ENCODE measurements at regions of chr19 and their contacts with region 1.

Region 1: GRCh38 chr19:18856385-18857126 is 24.8 kb downstream of the UPF1 start:
- DNase-seq: peak in 2 of 3 donors; percentile 47 to 58
- ATAC-seq: peak in 3 of 4 donors; percentile 4 to 65 (median 51)
- H3K4me3 ChIP-seq: no peak overlapping the region
- H3K27ac ChIP-seq: peak overlapping the region in 1 of 3 donors; percentile 18
- H3K4me1 ChIP-seq: peaks cover 0 to 11% (median 0%) of the 10 kb centered on the region in 4 donors
- H3K27me3 ChIP-seq: no peaks in the 10 kb centered on the region
- CTCF ChIP-seq: peak in 3 of 4 donors; percentile 5 to 38 (median 12)
- POLR2A ChIP-seq: no peak

Region 2: DNA sequence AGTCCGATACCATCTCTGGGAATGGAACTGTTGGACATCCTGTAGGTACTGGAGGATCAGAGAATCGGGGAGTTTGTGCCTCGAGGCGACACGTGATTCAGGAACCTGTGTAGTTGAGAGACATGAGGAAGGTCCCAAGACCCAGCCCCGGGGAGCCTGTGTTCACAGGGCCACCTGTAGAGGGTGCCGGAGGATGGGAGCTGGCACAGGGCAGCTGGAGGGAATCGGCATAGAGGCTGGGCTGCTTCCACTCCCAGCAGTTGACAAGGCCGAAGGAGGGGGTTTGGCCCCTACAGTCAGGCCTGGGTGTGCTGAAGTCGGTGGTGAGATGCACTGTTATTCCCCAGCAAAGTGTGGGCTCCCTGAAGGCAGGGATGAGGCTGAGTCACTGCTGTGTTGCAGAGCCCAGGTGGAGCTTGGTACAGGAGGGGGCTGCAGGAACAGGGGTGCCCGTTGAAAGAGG is 416.1 kb before region 1 on chr19:
- intact Hi-C with region 1: loop called in 1 of 2 experiments (anchors 10 kb)
- DNase-seq: no peak
- ATAC-seq: peak; percentile 3 to 13 (median 7)
- H3K4me3 ChIP-seq: no peak overlapping the region
- H3K27ac ChIP-seq: no peak overlapping the region
- H3K4me1 ChIP-seq: peaks cover 0 to 26% (median 6%) of the 10 kb centered on the region in 4 donors
- H3K27me3 ChIP-seq: no peaks in the 10 kb centered on the region
- CTCF ChIP-seq: peak; percentile 9 to 34 (median 16)
- POLR2A ChIP-seq: no peak

Region 3: GRCh38 chr19:18776288-18776594 is 80.3 kb before region 1 on chr19:
- intact Hi-C with region 1: loop called in 1 of 2 experiments (anchors 5 kb)
- DNase-seq: no peak
- ATAC-seq: peak in 2 of 4 donors; percentile 3 to 6
- H3K4me3 ChIP-seq: no peak overlapping the region
- H3K27ac ChIP-seq: no peak overlapping the region
- H3K4me1 ChIP-seq: no peaks in the 10 kb centered on the region
- H3K27me3 ChIP-seq: no peaks in the 10 kb centered on the region
- CTCF ChIP-seq: no peak
- POLR2A ChIP-seq: no peak

Region 4: DNA sequence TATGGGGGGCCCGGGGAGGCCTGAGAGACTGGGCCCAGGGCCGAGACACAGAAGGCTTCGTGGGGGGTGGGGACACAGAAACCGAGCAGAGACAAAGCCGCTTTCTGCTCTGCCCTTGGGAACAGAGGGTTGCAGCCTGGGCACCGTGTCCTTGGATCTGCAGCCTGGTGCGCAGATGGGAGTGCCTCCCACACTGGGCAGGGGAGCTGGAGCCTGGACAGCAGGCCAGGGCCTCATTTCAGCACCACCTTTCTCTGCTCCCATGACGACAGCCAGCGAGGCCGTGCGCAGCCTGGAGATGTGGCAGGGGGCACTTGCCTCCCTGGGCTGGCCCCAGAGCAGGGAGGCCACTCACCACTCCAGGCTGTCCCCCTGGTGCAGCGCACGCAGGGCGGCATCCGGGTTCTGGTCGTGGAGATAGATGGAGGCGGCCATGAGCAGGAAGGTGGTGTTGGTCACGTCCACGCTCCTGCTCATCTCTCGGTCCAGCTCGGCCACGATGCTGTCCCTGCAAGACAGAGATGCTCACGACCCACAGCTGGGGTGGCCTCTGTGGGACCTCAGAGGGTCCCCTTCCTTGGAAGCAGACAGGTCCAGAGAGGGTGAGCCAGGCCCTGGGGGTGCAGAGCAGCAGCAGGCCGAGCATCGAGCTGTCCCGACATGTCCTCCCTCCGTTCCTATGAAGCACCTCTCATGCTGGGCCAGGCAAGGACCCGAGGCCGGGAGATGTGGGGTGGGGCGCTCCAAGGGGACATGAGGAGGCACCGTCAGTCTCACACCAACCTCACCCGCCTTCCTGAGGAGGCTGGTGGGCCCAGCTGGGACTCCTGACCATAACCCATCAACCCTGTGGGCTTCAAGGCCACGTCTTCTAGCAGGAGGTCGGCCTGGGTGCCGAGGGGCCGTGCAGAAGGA is 50.3 kb after region 1 on chr19:
- intact Hi-C with region 1: no loop called
- DNase-seq: no peak
- ATAC-seq: no peak
- H3K4me3 ChIP-seq: no peak overlapping the region
- H3K27ac ChIP-seq: no peak overlapping the region
- H3K4me1 ChIP-seq: no peaks in the 10 kb centered on the region
- H3K27me3 ChIP-seq: no peaks in the 10 kb centered on the region
- CTCF ChIP-seq: no peak
- POLR2A ChIP-seq: no peak

Region 5: GRCh38 chr19:18921593-18921992 is 65.0 kb after region 1 on chr19:
- intact Hi-C with region 1: no loop called
- DNase-seq: no peak
- ATAC-seq: no peak
- H3K4me3 ChIP-seq: no peak overlapping the region
- H3K27ac ChIP-seq: no peak overlapping the region
- H3K4me1 ChIP-seq: peaks cover 0 to 25% (median 4%) of the 10 kb centered on the region in 4 donors
- H3K27me3 ChIP-seq: no peaks in the 10 kb centered on the region
- CTCF ChIP-seq: no peak
- POLR2A ChIP-seq: no peak

Measured in right lobe of liver (tissue), 6 donors.